ENCODE measurements at regions of chr7 and their contacts with region 1.

Region 1: GRCh38 chr7:119175911-119176627 is 951.6 kb downstream of the ANKRD7 start:
- DNase-seq: peak in 6 of 10 donors; percentile 21 to 71 (median 35)

Region 2: DNA sequence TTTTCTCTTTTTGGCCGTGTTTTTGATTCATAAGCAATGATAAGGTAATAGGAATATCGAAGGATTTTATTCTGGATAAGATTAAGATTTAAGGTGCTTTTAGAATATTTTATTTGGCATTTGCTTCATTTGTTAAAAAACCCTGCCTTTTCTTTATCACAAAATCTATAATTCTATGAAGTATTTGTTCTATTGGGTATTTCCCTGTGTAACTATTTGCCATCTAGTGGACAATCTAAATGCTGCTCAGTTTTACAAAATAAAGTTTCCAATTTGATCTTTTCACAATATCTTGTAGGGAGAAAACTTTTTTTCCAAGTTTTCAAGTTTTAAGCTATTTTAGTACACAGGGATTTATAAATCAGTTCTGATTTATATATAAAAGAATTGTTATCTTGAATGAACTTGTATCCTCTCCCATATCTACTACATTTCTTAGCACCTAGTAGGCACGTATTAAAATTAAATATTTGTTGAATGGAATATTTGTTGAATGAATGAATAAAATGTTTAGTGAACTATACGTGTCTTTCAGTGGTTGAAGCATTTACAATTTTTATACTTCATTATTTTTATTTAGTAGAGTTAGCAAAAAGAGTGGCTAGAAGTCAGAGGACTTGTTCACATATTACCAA is 925.1 kb before region 1 on chr7:
- intact Hi-C with region 1: loop called (anchors 10 kb)
- DNase-seq: no peak

Region 3: GRCh38 chr7:118352854-118353453 is 823.1 kb before region 1 on chr7:
- intact Hi-C with region 1: loop called (anchors 2 kb)
- DNase-seq: no peak

Measured in posterior cingulate gyrus (tissue), 11 donors.